Activated CD4-positive, alpha-beta T cell treated with anti-CD3 and anti-CD28 coated beads for 36 hours (primary cell): ENCODE measurements at regions of chr12 and their contacts with region 1.

Region 1: DNA sequence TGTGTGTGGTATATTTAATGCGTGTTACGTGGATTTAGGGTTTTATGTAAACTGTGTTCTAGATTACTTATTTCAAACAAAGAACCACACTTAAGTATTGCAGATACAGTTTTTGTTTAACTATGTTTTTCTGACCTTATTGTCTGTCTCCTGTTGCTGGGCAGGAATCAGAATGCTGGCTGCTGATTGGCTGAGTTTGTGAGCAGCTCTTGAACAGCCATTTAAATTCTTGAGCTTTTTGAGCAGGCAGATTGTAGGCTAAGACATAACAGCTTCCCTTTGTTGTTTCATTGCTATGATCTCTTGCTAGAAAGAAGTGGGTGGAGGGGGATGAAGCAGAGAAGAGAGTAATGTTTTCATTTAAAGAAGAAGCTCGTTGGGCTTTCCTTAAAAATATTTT is 52.2 kb downstream of the ATF7IP start:
- DNase-seq: peak; percentile 86
- ATAC-seq: peak; percentile 76
- H3K4me3 Mint-ChIP-seq: peak overlapping the region; percentile 56
- H3K27ac Mint-ChIP-seq: peak overlapping the region; percentile 92
- H3K4me1 Mint-ChIP-seq: peaks cover 59% of the 10 kb centered on the region
- H3K27me3 Mint-ChIP-seq: no peaks in the 10 kb centered on the region

Region 2: GRCh38 chr12:14384783-14385638 is 32.7 kb before region 1 on chr12:
- CTCF ChIA-PET with region 1: interaction called, 10 read pairs
- POLR2A ChIA-PET with region 1: interaction called, 5 read pairs
- intact Hi-C with region 1: no loop called
- DNase-seq: peak; percentile 75
- ATAC-seq: peak; percentile 96
- H3K4me3 Mint-ChIP-seq: peak overlapping the region; percentile 73
- H3K27ac Mint-ChIP-seq: peak overlapping the region; percentile 94
- H3K4me1 Mint-ChIP-seq: peaks cover 59% of the 10 kb centered on the region
- H3K27me3 Mint-ChIP-seq: no peaks in the 10 kb centered on the region

Region 3: DNA sequence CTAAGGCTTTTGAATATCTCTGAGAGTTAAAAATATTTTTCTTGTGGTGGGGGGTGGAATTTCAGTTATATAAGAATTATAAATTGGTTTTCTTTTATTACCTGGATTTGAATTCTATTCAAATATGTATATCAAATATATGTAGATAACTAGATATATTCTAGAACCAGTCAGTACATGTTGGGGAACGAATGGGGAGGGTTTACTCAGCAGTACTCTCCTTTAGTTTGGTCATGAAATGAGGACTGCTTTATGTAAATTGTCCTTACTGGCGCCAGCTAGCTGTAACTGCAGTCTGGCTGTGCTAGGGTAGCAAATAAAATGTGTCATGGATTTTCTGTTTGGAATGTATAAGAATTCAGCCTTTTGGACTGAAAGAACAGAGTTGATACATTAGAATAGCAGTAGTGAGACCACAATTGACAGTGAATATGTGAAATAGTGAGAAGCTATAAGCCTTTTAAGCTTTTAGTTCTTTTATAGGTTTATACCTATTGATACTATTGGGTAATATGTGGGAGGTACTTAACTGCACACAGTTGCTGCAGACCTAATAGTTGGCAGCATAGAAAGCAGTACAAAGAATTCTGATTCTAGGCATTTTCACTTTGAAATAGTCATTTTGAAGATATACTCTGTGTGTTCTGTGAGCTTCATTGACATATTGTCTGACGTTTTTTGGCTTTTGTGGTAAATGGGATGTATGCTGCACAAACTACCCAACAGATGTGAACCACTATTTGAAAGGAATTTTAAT is 23.2 kb before region 1 on chr12:
- CTCF ChIA-PET with region 1: interaction called, 10 read pairs
- POLR2A ChIA-PET with region 1: interaction called, 5 read pairs
- intact Hi-C with region 1: loop called (anchors 1 to 2 kb)
- DNase-seq: peak; percentile 66
- ATAC-seq: peak; percentile 82
- H3K4me3 Mint-ChIP-seq: peak overlapping the region; percentile 71
- H3K27ac Mint-ChIP-seq: peak overlapping the region; percentile 96
- H3K4me1 Mint-ChIP-seq: peaks cover 78% of the 10 kb centered on the region
- H3K27me3 Mint-ChIP-seq: no peaks in the 10 kb centered on the region

Region 4: GRCh38 chr12:14403711-14404196 is 14.0 kb before region 1 on chr12:
- CTCF ChIA-PET with region 1: interaction called, 18 read pairs
- POLR2A ChIA-PET with region 1: no interaction called
- intact Hi-C with region 1: loop called in 1 of 2 experiments (anchors 1 kb)
- DNase-seq: no peak
- ATAC-seq: peak; percentile 39
- H3K4me3 Mint-ChIP-seq: peak overlapping the region; percentile 33
- H3K27ac Mint-ChIP-seq: peak overlapping the region; percentile 83
- H3K4me1 Mint-ChIP-seq: peaks cover 77% of the 10 kb centered on the region
- H3K27me3 Mint-ChIP-seq: no peaks in the 10 kb centered on the region

Region 5: GRCh38 chr12:14454098-14454907 is 36.6 kb after region 1 on chr12:
- CTCF ChIA-PET with region 1: interaction called, 13 read pairs
- POLR2A ChIA-PET with region 1: no interaction called
- intact Hi-C with region 1: no loop called
- DNase-seq: peak; percentile 42
- ATAC-seq: peak; percentile 92
- H3K4me3 Mint-ChIP-seq: no peak overlapping the region
- H3K27ac Mint-ChIP-seq: peak overlapping the region; percentile 78
- H3K4me1 Mint-ChIP-seq: peaks cover 46% of the 10 kb centered on the region
- H3K27me3 Mint-ChIP-seq: no peaks in the 10 kb centered on the region